ENCODE measurements at regions of chr12 and their contacts with region 1.

Region 1: GRCh38 chr12:21677622-21678277 is 20.1 kb upstream of the LDHB start:
- DNase-seq: peak in 22 of 35 experiments; percentile 7 to 50 (median 24)
- ATAC-seq: peak; percentile 46 to 61 (median 56)
- H3K4me3 ChIP-seq: peak overlapping the region; percentile 4 to 37
- H3K4me3 Mint-ChIP-seq: peak overlapping the region; percentile 72 to 79 (median 72)
- H3K27ac ChIP-seq: peak overlapping the region; percentile 65
- H3K27ac Mint-ChIP-seq: peak overlapping the region; percentile 93 to 96
- H3K4me1 ChIP-seq: peaks cover 34 to 48% of the 10 kb centered on the region in 2 experiments
- H3K4me1 Mint-ChIP-seq: peaks cover 52 to 60% (median 59%) of the 10 kb centered on the region in 3 donors
- H3K27me3 ChIP-seq: no peaks in the 10 kb centered on the region
- H3K27me3 Mint-ChIP-seq: no peaks in the 10 kb centered on the region

Region 2: DNA sequence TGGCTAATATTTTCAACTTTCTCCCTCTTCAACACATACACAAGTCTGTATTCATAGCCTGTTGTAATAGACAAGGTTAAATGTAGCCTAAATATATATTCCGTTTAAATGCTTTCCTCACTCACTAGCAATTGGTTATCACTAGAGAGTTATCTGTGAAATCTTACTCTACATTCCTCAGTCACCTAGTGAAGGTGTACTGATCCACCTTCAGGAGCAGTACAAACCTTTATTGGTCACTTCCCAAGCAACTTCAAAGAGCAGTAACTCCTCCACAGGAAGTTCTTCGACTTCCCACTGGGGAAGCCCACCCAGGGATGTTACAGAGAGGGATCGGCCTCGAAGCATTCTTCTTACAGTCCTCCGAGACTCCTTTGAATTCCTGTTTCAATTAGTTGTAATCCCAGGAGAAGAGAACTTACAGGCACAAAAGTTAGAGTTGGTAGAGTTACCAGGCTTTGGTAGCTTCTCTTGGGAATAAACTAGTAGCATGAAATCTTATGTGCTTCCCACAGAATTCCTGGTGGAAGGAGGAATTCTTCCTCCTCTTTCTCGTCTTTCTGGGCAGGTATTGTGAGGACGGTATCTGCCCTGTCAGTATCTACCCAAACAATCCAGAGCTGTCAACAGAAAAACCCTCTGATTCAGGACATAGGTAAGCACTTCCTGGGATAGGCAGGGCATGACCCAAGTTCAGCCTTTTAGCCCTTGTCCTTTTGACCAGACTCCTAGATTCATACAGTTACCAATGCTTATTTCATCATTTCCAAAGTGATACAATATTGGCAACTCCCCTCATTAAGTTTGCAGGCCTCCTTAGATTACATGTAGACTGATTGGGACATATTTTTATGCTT is 73.3 kb before region 1 on chr12 and contains the start of gene GYS2:
- CTCF ChIA-PET with region 1: interaction called, 12 to 13 read pairs
- POLR2A ChIA-PET with region 1: no interaction called
- DNase-seq: no peak
- ATAC-seq: no peak
- H3K4me3 ChIP-seq: no peak within 1 kb of the TSS
- H3K4me3 Mint-ChIP-seq: no peak within 1 kb of the TSS
- H3K27ac ChIP-seq: no peak within 1 kb of the TSS
- H3K27ac Mint-ChIP-seq: no peak within 1 kb of the TSS
- H3K4me1 ChIP-seq: peaks cover 0 to 5% of the 10 kb centered on the region in 2 experiments
- H3K4me1 Mint-ChIP-seq: no peaks in the 10 kb centered on the region
- H3K27me3 ChIP-seq: no peaks in the 10 kb centered on the region
- H3K27me3 Mint-ChIP-seq: no peaks in the 10 kb centered on the region
- total RNA-seq, gene GYS2: 0.23 to 0.40 (median 0.28) TPM in 3 of 5 donors, not detected in the others

Region 3: DNA sequence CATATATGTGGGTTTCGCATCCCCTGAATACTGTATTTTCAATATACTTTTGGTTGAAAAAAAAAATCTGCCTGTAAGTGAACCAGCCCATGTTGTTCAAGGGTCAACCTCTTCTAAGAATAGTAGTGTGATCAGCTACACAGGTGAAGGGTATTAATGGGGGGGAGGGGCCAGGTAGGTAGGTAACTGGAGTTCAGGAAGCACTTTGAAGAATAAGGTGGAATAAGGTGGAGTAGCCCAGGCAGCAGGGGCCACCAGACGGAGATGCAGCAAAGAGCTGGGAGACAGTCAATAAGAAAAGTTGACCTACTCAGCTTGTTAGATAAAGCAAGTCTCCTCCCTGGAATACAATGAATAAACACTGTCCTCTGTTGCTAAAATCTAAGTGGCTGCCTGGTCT is 29.4 kb before region 1 on chr12:
- CTCF ChIA-PET with region 1: interaction called, 5 to 7 read pairs
- POLR2A ChIA-PET with region 1: interaction called in 1 of 2 experiments, 14 read pairs
- DNase-seq: no peak
- ATAC-seq: no peak
- H3K4me3 ChIP-seq: no peak overlapping the region
- H3K4me3 Mint-ChIP-seq: peak overlapping the region in 1 of 3 donors; percentile 26
- H3K27ac ChIP-seq: no peak overlapping the region
- H3K27ac Mint-ChIP-seq: peak overlapping the region; percentile 13 to 64
- H3K4me1 ChIP-seq: peaks cover 8 to 50% of the 10 kb centered on the region in 2 experiments
- H3K4me1 Mint-ChIP-seq: peaks cover 92 to 96% (median 95%) of the 10 kb centered on the region in 3 donors
- H3K27me3 ChIP-seq: no peaks in the 10 kb centered on the region
- H3K27me3 Mint-ChIP-seq: no peaks in the 10 kb centered on the region

Region 4: GRCh38 chr12:21657326-21658077 is 20.2 kb before region 1 on chr12 and contains the start of gene LDHB:
- CTCF ChIA-PET with region 1: interaction called, 5 to 12 read pairs
- POLR2A ChIA-PET with region 1: interaction called in 1 of 2 experiments, 4 read pairs
- DNase-seq: peak; percentile 80 to 95 (median 90)
- ATAC-seq: peak; percentile 94 to 96 (median 96)
- H3K4me3 ChIP-seq: peak within 1 kb of the TSS; percentile 89 to 93
- H3K4me3 Mint-ChIP-seq: peak within 1 kb of the TSS; percentile 89 to 100 (median 100)
- H3K27ac ChIP-seq: peak within 1 kb of the TSS; percentile 69
- H3K27ac Mint-ChIP-seq: peak within 1 kb of the TSS; percentile 97 to 100
- H3K4me1 ChIP-seq: peaks cover 10 to 34% of the 10 kb centered on the region in 2 experiments
- H3K4me1 Mint-ChIP-seq: peaks cover 55 to 73% (median 68%) of the 10 kb centered on the region in 3 donors
- H3K27me3 ChIP-seq: no peaks in the 10 kb centered on the region
- H3K27me3 Mint-ChIP-seq: no peaks in the 10 kb centered on the region
- total RNA-seq, gene LDHB: 680 to 879 (median 854) TPM

Region 5: DNA sequence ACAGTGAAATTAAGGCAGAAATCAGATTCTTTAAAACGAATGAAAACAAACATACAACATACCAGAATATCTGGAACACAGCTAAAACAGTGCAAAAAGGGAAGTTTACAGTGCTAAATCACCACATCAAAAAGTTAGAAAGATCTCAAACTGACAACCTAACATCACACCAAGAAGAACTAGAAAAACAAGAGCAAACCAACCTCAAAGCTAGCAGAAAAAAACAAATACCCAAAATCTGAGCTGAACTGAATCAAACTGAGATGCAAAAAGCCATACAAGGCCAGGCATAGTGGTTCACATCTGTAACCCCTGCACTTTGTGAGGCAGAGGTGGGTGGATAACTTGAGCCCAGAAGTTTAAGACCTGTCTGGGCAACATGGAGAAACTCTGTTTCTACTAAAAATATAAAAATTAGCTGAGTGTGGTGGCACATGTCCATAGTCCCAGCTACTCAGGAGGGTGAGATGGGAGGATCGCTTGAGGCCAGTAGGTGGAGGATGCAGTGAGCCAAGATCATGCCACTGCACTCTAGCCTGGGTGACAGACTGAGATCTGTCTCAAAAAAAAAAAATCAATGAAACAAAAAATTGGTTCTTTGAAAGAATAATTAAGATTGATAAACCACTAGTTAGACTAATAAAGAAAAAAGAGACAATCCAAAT is 13.1 kb after region 1 on chr12:
- CTCF ChIA-PET with region 1: interaction called, 4 to 10 read pairs
- POLR2A ChIA-PET with region 1: no interaction called
- DNase-seq: peak in 1 of 35 experiments; percentile 25
- ATAC-seq: peak; percentile 76 to 90 (median 84)
- H3K4me3 ChIP-seq: no peak overlapping the region
- H3K4me3 Mint-ChIP-seq: peak overlapping the region; percentile 2 to 61 (median 55)
- H3K27ac ChIP-seq: peak overlapping the region; percentile 22
- H3K27ac Mint-ChIP-seq: peak overlapping the region; percentile 87 to 97
- H3K4me1 ChIP-seq: peaks cover 5 to 12% of the 10 kb centered on the region in 2 experiments
- H3K4me1 Mint-ChIP-seq: peaks cover 25 to 34% (median 27%) of the 10 kb centered on the region in 3 donors
- H3K27me3 ChIP-seq: peaks cover 0 to 10% of the 10 kb centered on the region in 2 experiments
- H3K27me3 Mint-ChIP-seq: no peaks in the 10 kb centered on the region

Region 6: GRCh38 chr12:21788089-21788983 is 110.6 kb after region 1 on chr12:
- CTCF ChIA-PET with region 1: no interaction called
- POLR2A ChIA-PET with region 1: no interaction called
- DNase-seq: no peak
- ATAC-seq: no peak
- H3K4me3 ChIP-seq: no peak overlapping the region
- H3K4me3 Mint-ChIP-seq: no peak overlapping the region
- H3K27ac ChIP-seq: no peak overlapping the region
- H3K27ac Mint-ChIP-seq: no peak overlapping the region
- H3K4me1 ChIP-seq: no peaks in the 10 kb centered on the region
- H3K4me1 Mint-ChIP-seq: no peaks in the 10 kb centered on the region
- H3K27me3 ChIP-seq: no peaks in the 10 kb centered on the region
- H3K27me3 Mint-ChIP-seq: peaks cover 9 to 10% of the 10 kb centered on the region in 2 donors

Measured in T-cell (primary cell).